Breast epithelium (tissue), 4 donors: ENCODE measurements at regions of chr16 and their contacts with region 1.

Region 1: DNA sequence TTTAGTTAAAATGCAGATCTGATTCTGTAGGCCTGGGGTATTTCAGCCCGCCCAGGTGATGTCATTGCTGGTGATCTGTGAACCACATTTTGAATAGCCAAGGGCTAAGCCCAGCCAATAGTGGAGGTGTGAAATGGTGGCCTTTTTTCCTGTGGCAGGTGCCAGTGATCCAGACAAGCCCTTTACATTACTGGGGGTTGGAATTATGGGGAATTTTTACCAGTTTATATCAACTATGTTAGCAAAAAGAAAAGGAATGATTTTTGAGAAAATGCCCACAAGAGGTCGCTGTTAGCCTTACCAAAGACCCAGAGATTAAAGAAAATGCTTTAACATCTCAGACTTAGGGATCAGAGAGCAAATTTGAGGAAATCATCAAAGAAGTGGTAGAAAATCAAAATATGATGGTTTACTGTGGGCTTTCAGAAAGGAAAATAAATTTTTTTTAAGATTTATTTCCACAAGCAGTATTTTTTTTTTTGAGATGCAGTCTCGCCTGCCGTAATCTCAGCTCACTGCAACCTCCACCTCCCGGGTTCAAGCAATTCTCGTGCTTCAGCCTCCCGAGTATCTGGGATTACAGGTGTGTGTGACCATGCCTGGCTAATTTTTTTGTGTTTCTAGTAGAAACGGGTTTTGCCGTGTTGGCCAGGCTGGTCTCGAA is 3.9 kb downstream of the VPS35L start:
- DNase-seq: no peak
- H3K4me3 ChIP-seq: no peak overlapping the region
- H3K27ac ChIP-seq: no peak overlapping the region
- H3K4me1 ChIP-seq: no peaks in the 10 kb centered on the region
- H3K27me3 ChIP-seq: no peaks in the 10 kb centered on the region
- CTCF ChIP-seq: peak; percentile 18 to 51 (median 45)
- POLR2A ChIP-seq: no peak

Region 2: DNA sequence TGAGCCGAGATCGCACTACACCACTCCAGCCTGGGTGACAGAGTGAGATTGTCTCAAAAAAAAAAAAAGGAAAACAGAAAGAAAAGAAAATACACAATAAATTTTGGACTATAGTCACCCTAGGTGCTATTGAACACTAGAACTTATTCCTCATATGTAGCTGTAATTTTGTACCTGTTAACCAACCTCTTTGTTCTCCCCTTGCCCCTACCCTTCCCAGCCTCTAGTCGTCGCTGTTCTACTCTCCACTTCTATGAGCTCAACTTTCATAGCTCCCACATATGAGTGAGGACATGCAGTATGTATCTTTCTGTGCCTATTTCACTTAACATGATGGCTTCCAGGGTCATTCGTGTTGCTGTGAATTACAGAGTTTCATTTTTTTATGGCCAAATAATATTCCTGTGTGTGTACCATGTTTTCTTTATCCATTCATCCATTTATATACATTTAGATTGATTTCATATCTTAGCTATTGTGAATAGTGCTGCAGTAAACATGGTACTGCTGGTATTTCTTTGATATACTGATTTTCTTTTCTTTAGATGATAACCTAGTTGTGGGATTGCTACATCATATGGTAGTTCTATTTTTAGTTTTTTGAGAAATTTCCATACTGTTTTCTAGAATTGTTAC is 24.4 kb after region 1 on chr16:
- intact Hi-C with region 1: loop called (anchors 1 kb)
- DNase-seq: no peak
- H3K4me3 ChIP-seq: no peak overlapping the region
- H3K27ac ChIP-seq: no peak overlapping the region
- H3K4me1 ChIP-seq: no peaks in the 10 kb centered on the region
- H3K27me3 ChIP-seq: no peaks in the 10 kb centered on the region
- CTCF ChIP-seq: peak; percentile 38 to 56 (median 44)
- POLR2A ChIP-seq: no peak

Region 3: DNA sequence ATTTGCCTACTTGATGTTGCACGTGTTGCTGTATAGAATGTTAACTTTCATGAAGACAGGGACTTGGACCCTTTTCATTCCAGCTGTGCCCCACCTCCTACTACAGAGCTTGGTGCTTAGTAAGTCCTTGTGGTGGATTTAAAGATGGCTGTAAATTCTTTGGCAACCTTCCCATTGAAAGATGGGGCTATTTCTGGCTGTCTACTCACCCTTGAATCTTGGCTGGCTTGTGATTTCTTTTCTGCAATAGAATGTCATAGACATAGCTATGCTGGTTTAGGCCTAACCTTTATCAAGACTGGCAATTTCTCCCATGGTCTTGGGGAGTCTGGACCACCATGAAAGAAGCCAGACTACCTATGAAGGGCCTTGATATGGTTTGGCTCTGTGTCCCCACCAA is 950.9 kb after region 1 on chr16:
- intact Hi-C with region 1: no loop called
- DNase-seq: no peak
- H3K4me3 ChIP-seq: no peak overlapping the region
- H3K27ac ChIP-seq: no peak overlapping the region
- H3K4me1 ChIP-seq: no peaks in the 10 kb centered on the region
- H3K27me3 ChIP-seq: no peaks in the 10 kb centered on the region
- CTCF ChIP-seq: no peak
- POLR2A ChIP-seq: no peak